PC-3 (cell line): ENCODE measurements at regions of chr5 and their contacts with region 1.

Region 1: DNA sequence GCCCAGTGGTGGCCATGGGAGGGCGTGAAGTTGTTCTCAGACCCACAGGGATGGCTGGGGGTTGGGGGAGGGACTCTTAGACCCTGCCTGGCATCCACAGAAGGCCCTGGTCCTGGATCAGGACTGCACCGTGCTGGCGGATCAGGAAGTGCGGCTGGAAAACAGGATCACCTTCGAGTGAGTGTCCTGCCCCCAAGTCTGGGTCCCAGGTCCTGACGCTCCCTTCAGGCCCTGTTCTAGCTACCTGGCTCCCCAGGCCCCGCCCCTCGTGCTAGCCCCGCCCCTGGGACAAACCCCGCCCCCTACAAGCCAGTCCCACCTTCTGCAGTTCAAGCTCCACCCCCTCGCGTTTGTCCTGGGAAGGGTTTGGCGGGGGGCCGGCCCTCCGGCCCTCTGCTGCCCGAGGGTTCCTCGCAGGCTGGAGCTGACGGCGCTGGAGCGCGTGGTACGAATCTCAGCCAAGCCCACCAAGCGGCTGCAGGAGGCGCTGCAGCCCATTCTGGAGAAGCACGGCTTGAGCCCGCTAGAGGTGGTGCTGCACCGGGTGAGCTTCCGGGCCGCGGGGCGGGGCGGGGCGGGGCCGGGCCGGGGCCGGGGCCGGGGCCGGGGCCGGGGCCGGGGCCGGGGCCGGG is 12.9 kb downstream of the RGS14 start:
- DNase-seq: peak; percentile 94
- ATAC-seq: peak; percentile 92
- H3K4me3 ChIP-seq: peak overlapping the region; percentile 74
- H3K27ac ChIP-seq: no peak overlapping the region
- H3K4me1 ChIP-seq: peaks cover 6% of the 10 kb centered on the region
- H3K27me3 ChIP-seq: no peaks in the 10 kb centered on the region
- CTCF ChIP-seq: peak; percentile 57

Region 2: GRCh38 chr5:177198738-177199137 is 171.9 kb before region 1 on chr5:
- CTCF ChIA-PET with region 1: no interaction called
- POLR2A ChIA-PET with region 1: no interaction called
- intact Hi-C with region 1: no loop called
- DNase-seq: no peak
- ATAC-seq: no peak
- H3K4me3 ChIP-seq: no peak overlapping the region
- H3K27ac ChIP-seq: no peak overlapping the region
- H3K4me1 ChIP-seq: peaks cover 13% of the 10 kb centered on the region
- H3K27me3 ChIP-seq: no peaks in the 10 kb centered on the region
- CTCF ChIP-seq: no peak

Region 3: GRCh38 chr5:177390363-177391300 is 20.0 kb after region 1 on chr5:
- CTCF ChIA-PET with region 1: interaction called, 35 read pairs
- POLR2A ChIA-PET with region 1: interaction called, 3 read pairs
- intact Hi-C with region 1: no loop called
- DNase-seq: peak; percentile 95
- ATAC-seq: peak; percentile 73
- H3K4me3 ChIP-seq: peak overlapping the region; percentile 24; the same call in 1 of the 2 replicates
- H3K27ac ChIP-seq: peak overlapping the region; percentile 95
- H3K4me1 ChIP-seq: peaks cover 27% of the 10 kb centered on the region
- H3K27me3 ChIP-seq: no peaks in the 10 kb centered on the region
- CTCF ChIP-seq: peak; percentile 93

Region 4: DNA sequence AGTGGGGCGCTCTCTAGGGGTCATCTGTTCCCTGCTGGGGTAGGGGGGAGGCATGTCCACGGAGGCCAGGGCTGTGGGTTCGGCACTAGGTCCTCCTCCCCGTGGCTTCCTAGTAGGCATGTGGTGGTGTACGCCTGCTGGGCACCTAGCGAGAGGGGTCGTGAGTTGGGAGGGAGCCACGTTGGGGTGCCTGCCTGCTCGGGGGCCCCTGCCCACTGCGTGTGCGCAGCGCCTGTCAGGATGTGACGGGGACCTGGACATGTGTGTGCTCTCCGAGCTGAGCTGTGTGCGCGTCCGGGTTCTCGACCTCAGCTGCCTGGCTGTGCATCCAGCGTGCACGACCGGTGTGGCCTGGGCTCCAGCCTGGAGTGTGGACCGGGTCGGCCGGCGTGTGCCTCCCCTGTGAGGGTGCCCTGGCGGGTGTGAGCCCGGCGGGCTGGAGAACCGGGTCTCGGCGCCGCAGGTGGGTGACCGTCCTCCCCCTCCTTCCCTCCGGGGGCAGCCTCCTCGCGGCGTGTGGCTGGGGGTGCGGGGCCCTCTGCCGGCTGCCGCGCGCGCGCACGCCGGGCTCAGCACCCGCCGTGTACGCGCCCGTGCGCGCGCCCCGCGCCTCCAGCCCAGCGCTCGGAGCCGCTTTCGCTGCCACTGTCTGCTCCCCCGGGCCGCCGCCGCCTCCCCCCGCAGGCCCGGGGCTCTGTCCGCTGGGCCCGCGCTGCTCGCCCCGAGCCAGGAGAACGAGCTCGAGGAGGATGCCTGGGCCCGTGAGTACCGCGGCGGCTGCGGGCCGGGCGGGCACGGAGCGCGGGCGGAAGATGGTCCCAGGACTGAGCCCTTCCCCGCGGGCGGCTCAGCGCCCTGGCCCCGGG is 75.8 kb after region 1 on chr5 and contains the start of gene PRR7:
- CTCF ChIA-PET with region 1: interaction called, 18 read pairs
- POLR2A ChIA-PET with region 1: no interaction called
- intact Hi-C with region 1: no loop called
- DNase-seq: peak; percentile 79
- ATAC-seq: peak; percentile 36
- H3K4me3 ChIP-seq: peak within 1 kb of the TSS; percentile 82
- H3K27ac ChIP-seq: peak within 1 kb of the TSS; percentile 85
- H3K4me1 ChIP-seq: peaks cover 23% of the 10 kb centered on the region
- H3K27me3 ChIP-seq: no peaks in the 10 kb centered on the region
- CTCF ChIP-seq: no peak
- total RNA-seq, gene PRR7: 40.6 and 47.2 TPM in 2 replicates

Region 5: DNA sequence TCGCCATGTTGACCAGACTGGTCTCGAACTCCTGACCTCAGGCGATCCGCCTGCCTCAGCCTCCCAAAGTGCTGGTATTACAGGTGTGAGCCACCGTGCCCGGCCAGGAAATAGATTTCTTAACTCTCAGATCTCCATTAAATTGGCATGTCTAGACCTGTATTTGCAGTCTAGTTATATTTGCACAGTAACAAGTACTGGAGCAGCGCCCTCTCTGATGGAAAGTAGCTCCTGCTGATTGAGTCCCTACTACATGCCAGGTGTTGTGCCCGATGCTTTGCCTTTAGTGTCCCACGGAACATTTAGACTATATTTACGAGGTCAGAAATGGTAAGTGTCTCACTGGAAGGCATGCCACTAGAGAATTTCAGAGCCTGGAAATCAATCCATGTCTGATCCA is 205.6 kb after region 1 on chr5:
- CTCF ChIA-PET with region 1: interaction called, 12 read pairs
- POLR2A ChIA-PET with region 1: no interaction called
- intact Hi-C with region 1: no loop called
- DNase-seq: peak; percentile 31
- ATAC-seq: peak; percentile 43; the same call in 1 of the 2 replicates
- H3K4me3 ChIP-seq: no peak overlapping the region
- H3K27ac ChIP-seq: no peak overlapping the region
- H3K4me1 ChIP-seq: no peaks in the 10 kb centered on the region
- H3K27me3 ChIP-seq: peaks cover 10% of the 10 kb centered on the region; the same call in 1 of the 2 replicates
- CTCF ChIP-seq: peak; percentile 38; the same call in 1 of the 2 replicates